ENCODE measurements at regions of chr2 and their contacts with region 1.

Region 1: DNA sequence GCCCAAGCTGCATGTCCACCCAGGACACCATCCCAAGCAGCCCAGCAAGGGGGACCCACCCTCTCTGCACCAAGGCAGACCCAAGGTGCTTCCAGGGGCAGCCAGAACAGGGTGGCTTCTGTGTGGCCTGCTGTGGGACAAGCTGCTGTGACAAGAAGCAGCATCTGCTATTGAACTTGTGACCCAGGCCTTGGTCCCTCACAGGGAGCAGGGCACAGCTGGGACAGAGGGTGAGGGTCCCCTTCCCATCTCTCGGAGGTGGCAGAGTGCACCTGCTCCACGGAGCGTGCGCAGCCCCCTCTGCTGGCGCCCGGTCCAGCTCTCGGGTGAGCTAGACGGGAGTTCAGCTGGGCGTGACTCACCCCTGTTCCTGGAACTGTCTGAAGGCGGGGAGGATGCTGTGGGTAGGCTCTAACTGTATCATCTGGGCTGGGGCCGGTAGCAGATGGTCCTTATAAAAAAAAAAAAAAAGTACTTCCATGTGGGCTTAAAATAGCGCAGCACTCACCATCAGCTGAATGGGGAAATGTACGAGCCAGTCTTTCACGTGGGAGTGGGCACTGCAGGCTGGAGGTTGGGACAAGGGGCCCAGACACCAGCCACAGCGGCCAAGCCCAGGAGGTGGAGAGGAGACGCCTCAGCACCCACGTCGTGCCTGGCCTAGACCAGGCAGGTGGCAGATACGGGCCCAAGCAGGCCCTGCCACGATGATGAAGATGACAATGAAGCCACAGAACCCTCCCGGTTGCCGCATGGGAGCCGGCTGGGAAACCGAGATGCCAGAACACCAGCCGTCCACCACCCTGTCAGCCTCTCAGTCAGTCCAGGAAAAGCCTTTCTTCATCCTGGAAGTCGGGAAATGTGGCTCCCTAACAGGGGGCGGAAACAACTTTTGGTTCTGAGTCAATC is 136.8 kb upstream of the ID2 start:
- DNase-seq: peak; percentile 86
- ATAC-seq: peak; percentile 93
- H3K4me3 Mint-ChIP-seq: peak overlapping the region; percentile 35
- H3K27ac Mint-ChIP-seq: peak overlapping the region; percentile 97
- H3K4me1 Mint-ChIP-seq: peaks cover 79% of the 10 kb centered on the region
- H3K27me3 Mint-ChIP-seq: no peaks in the 10 kb centered on the region

Region 2: DNA sequence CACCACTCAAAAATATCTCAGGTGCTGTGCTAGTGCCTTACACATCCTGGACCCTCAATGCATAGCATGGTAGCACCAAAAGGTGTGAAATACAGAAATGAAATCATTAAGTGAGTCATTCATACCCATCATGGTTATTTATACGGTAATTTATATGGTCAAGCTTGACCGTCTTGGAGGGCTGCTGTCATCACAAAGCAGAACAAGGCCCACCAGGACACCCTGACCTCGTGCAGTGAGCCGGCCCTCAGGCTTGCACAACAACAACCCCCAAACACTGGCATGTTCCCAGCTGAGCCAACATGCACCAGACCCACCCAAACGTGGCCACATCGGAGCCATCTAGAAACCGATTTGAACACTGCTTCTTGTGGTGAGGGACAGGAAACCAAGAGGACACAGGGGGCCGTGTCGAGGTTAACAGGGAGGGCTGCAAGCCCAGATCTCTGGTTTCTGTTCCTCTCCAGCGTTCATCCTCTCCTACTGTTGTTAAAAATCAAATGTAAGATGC is 241.7 kb before region 1 on chr2:
- POLR2A ChIA-PET with region 1: interaction called, 16 read pairs
- DNase-seq: peak; percentile 82
- ATAC-seq: peak; percentile 70
- H3K4me3 Mint-ChIP-seq: peak overlapping the region; percentile 75
- H3K27ac Mint-ChIP-seq: peak overlapping the region; percentile 88
- H3K4me1 Mint-ChIP-seq: peaks cover 76% of the 10 kb centered on the region
- H3K27me3 Mint-ChIP-seq: peaks cover 5% of the 10 kb centered on the region

Region 3: GRCh38 chr2:8472545-8473323 is 72.3 kb before region 1 on chr2:
- POLR2A ChIA-PET with region 1: interaction called, 20 read pairs
- DNase-seq: no peak
- ATAC-seq: peak; percentile 89
- H3K4me3 Mint-ChIP-seq: peak overlapping the region; percentile 70
- H3K27ac Mint-ChIP-seq: peak overlapping the region; percentile 88
- H3K4me1 Mint-ChIP-seq: peaks cover 78% of the 10 kb centered on the region
- H3K27me3 Mint-ChIP-seq: no peaks in the 10 kb centered on the region

Region 4: DNA sequence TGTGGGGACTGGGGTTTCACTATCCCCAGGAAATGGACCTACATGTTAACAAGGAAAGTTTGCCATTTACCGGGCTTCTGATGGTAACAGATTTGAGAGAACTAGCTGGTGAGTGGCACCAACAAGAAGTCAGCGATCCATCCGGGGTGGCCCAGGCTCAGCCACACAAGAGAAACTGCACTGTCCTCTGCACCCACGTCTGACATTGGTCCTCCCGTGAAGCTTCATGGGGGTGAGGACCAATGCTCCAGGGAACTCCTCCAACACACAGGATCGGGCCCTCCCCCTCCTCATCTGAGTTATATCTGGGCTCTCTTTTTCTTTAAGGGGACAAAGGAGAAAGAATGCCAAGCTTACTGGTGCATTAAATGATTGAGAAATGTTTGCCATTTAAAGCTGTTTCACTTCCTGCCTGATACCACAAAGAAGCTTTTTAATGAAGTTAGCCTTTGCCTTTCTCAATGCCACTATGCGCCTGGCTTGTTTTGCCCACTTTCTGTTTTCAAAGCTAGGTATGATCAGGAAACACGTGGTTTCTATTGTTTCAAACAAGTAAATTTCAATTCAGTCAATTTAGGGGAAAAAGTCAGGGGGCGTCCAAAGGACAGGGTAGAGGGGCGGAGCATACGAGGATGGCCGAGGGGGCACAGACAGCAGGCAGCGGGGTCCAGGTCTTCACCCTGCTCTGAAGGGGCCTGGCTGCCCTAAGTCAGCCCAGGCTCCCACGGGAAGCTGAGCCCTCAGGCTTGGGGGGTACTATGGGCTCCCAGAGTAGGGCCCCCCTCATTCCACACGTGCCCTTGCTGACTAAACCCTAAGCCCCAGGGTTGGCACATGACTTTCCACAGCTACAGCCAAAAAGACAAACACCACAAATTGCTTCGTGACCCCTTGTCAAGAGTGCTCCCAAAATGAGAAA is 67.2 kb before region 1 on chr2:
- POLR2A ChIA-PET with region 1: interaction called, 20 read pairs
- DNase-seq: no peak
- ATAC-seq: peak; percentile 25
- H3K4me3 Mint-ChIP-seq: peak overlapping the region; percentile 60
- H3K27ac Mint-ChIP-seq: peak overlapping the region; percentile 88
- H3K4me1 Mint-ChIP-seq: peaks cover 89% of the 10 kb centered on the region
- H3K27me3 Mint-ChIP-seq: no peaks in the 10 kb centered on the region

Region 5: DNA sequence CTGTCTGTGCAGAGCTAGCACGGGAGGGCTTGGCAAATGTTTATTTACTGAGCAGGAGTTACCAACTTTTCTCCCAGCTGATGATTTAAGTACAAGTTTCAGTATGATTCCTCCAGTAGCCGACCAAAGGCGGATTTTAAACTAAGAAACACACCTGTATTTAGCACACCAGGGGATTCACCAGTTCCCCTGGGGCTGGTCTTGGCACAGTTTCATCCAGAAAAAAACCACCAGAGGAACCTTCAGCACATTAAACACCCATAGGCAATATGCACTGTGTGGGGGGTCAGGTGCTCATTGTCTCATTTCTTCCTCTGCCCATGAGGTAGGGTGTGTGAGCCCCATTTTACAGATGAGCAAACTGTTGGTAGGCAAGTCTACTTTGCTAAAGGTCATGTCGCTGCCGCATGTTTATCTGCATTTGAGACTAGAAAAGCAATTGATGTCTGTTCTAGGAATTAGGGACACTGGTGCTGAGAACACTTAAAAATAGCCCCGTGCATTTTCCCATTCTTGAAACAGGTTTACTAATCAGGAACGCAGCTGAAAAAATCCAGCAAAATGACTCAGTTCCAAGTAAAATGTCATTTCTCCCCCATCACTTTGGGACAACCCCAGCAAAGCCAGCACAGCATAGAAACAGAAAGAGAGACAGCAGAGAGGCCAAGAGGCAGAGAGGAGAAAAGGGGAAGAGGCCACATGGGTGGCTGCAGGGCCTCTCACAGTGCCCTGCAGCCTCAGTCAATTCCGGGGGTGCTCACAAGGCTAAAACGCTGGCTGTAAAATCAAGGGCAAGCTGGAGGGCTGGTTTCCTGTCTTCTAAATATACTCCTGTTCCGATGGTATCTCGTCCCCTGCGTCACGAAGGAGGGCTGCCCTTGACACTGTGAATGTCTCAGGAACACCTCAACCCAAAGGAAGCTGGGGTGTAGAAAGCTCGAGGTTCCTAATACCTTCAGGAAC is 30.0 kb before region 1 on chr2:
- POLR2A ChIA-PET with region 1: interaction called, 17 read pairs
- DNase-seq: peak; percentile 64
- ATAC-seq: peak; percentile 92
- H3K4me3 Mint-ChIP-seq: peak overlapping the region; percentile 69
- H3K27ac Mint-ChIP-seq: peak overlapping the region; percentile 87
- H3K4me1 Mint-ChIP-seq: peaks cover 69% of the 10 kb centered on the region
- H3K27me3 Mint-ChIP-seq: no peaks in the 10 kb centered on the region

Measured in activated naive CD8-positive, alpha-beta T cell treated with anti-CD3 and anti-CD28 coated beads, Interleukin-2, amount 10 ng/mL, durations not matched to agents 7 days and 5 days (primary cell).